Posterior vena cava (tissue), 2 donors: ENCODE measurements at regions of chr4 and their contacts with region 1.

Region 1: DNA sequence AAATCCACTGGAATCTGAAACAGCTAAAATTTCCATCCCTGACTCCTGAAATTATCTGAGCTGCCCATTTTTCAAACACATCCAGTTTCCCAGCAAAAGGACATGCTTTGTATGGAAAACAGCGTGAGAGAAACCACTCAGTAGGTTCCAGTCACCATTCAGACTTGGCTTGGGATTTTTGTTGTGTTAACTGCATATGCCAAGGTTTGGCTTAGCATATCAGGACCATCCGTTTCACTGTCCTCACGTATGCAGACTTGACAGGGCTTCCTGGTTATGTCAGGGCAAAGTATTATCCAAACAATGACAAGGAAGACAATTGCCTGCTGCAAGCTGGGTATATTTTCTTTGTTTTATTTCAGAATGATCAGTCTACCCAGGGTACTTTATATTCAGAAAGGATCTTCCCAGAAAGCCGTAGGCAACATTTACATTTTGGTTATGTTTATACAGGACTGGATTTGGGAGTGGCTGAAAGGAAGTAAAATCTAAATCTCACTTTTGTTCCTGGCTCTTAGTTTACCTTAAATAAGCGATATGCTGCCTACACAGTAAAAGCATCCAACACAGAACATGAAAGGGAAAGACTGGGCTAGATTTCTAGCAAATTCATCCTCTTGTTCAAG is 41.3 kb upstream of the CCKAR start:
- DNase-seq: no peak

Region 2: DNA sequence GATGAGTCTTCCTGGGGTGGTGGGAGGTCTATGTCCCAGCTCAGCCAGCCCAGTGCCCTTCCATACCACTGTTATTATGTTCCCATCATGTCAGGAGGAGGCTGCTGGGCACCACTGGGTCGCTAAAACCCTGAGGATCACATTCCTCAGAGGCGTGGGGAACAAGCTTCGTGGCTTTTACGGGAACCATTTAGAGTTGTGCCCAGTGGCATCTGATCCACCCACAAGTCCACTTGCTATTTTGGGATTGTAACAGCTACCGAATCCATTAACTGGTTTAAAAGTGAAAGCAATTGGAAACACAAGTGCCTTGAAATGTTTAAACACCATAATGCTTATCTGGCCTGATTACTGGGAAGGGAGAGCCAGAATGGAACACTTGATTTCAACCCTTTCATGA is 28.2 kb before region 1 on chr4:
- intact Hi-C with region 1: loop called in 1 of 2 experiments (anchors 2 kb)
- DNase-seq: no peak

Region 3: GRCh38 chr4:26515936-26516335 is 15.7 kb before region 1 on chr4:
- intact Hi-C with region 1: no loop called
- DNase-seq: no peak

Region 4: GRCh38 chr4:26609391-26609790 is 77.8 kb after region 1 on chr4:
- intact Hi-C with region 1: no loop called
- DNase-seq: no peak